HepG2 (cell line): ENCODE measurements at regions of chr6 and their contacts with region 1.

Region 1: GRCh38 chr6:110815217-110816109 is at the start of gene CDK19:
- DNase-seq: peak; percentile 98
- ATAC-seq: peak; percentile 91
- H3K4me3 ChIP-seq: peak within 1 kb of the TSS; percentile 92 to 94 (median 92)
- H3K27ac ChIP-seq: peak within 1 kb of the TSS; percentile 100
- H3K4me1 ChIP-seq: peaks cover 38% of the 10 kb centered on the region
- H3K27me3 ChIP-seq: no peaks in the 10 kb centered on the region; a peak in 1 of 5 replicates
- CTCF ChIP-seq: no peak
- EP300 ChIP-seq: no peak
- POLR2A ChIP-seq: peak; percentile 94 to 98
- RAD21 ChIP-seq: no peak
- total RNA-seq, gene CDK19: 13.4 and 20.8 TPM in 2 replicates

Region 2: DNA sequence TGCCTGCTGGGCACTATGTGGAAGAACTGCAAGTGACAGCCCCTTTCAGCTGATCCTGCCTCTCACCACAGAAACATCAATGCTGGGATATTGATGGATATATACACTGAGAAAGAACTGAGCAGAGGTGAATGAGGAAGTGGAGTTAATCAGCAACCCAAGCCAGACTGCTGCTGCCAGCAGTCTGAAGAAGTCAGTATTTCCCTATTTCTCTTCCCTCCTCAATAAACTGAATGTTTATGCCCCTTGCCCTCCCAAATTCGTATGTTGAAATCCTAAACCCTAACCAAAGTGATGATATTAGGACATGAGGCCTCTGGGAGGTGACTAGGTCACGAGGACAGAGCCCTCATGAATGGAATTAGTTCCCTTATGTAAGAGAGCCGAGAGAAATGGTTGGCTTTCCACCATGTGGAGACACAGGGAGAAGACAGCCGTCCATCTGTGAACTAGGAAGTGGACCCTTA is 76.5 kb before region 1 on chr6:
- CTCF ChIA-PET with region 1: no interaction called
- POLR2A ChIA-PET with region 1: interaction called, 5 read pairs
- in situ Hi-C with region 1: no loop called
- intact Hi-C with region 1: loop called (anchors 5 kb)
- DNase-seq: peak; percentile 86
- ATAC-seq: peak; percentile 99
- H3K4me3 ChIP-seq: peak overlapping the region in 2 of 3 experiments; percentile 23 to 24; a peak in 4 of 6 replicates
- H3K27ac ChIP-seq: peak overlapping the region; percentile 71
- H3K4me1 ChIP-seq: peaks cover 39% of the 10 kb centered on the region
- H3K27me3 ChIP-seq: no peaks in the 10 kb centered on the region
- CTCF ChIP-seq: peak; percentile 29
- EP300 ChIP-seq: peak in 1 of 2 experiments; percentile 56; a peak in 2 of 4 replicates
- POLR2A ChIP-seq: peak in 1 of 2 experiments; percentile 38; a peak in 1 of 4 replicates
- RAD21 ChIP-seq: no peak

Region 3: DNA sequence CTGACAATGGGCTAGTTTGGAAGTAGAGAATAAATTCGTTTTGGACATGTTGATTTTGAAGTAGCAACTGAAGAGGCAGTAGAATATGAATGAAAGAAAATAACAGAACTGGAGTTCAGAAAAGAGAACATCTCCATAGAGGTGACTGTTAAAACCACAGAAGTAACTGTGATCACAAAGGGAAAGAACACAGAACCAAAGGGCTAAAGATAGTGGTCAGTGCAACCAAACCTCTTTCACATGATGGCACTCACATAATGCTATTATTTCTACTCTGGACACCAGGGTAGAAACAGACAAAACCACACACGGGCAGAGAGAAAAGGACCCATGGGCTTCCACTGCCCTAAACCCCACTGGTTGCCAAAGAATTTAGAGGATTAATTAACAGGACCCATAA is 58.6 kb before region 1 on chr6:
- CTCF ChIA-PET with region 1: no interaction called
- POLR2A ChIA-PET with region 1: interaction called, 11 read pairs
- in situ Hi-C with region 1: no loop called
- intact Hi-C with region 1: no loop called
- DNase-seq: no peak
- ATAC-seq: no peak
- H3K4me3 ChIP-seq: no peak overlapping the region
- H3K27ac ChIP-seq: peak overlapping the region; percentile 5
- H3K4me1 ChIP-seq: peaks cover 53% of the 10 kb centered on the region
- H3K27me3 ChIP-seq: no peaks in the 10 kb centered on the region
- CTCF ChIP-seq: no peak
- EP300 ChIP-seq: no peak
- POLR2A ChIP-seq: no peak
- RAD21 ChIP-seq: no peak

Region 4: DNA sequence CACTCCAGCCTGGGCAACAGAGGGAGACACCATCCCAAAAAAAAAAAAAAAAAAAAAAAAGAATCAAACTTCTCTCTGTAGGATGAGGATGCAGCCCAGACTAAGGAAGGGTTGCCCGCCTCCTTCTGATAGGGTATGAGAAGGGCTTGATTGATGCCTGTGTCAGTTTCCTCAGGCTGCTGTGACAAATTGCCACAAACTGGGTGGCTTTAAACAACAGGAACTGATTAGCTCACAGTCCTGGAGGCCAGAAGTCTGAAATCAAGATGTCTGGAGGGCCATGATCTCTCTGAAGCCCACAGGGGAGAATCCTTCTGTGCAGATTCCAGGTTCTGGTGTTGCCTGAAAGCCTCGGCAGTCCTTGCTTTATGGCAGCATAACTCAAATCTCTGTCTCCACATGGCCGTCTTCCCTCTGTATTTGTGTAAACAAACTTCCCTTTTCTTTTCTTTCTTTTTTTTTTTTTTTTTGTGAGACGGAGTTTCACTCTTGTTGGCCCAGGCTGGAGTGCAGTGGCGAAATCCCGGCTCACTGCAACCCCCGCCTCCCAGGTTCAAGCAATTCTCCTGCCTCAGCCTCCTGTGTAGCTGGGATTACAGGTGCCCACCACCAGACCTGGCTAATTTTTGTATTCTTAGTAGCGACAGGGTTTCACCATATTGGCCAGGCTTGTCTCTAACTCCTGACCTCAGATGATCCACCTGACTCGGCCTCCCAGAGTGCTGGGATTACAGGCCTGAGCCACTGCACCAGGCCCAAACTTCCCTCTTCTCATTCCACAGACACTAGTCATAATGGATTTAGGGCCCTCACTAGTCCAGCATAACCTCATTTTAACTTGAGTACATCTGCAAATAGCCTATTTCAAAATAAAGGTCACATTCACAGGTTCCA is 11.0 kb after region 1 on chr6:
- CTCF ChIA-PET with region 1: no interaction called
- POLR2A ChIA-PET with region 1: interaction called, 20 read pairs
- in situ Hi-C with region 1: no loop called
- intact Hi-C with region 1: no loop called
- DNase-seq: no peak
- ATAC-seq: peak; percentile 76
- H3K4me3 ChIP-seq: peak overlapping the region; percentile 17 to 42 (median 19); a peak in 5 of 6 replicates
- H3K27ac ChIP-seq: peak overlapping the region; percentile 35
- H3K4me1 ChIP-seq: peaks cover 22% of the 10 kb centered on the region
- H3K27me3 ChIP-seq: no peaks in the 10 kb centered on the region
- CTCF ChIP-seq: no peak
- EP300 ChIP-seq: no peak
- POLR2A ChIP-seq: no peak
- RAD21 ChIP-seq: no peak

Region 5: GRCh38 chr6:110949679-110950285 is 134.3 kb after region 1 on chr6:
- CTCF ChIA-PET with region 1: no interaction called
- POLR2A ChIA-PET with region 1: no interaction called
- in situ Hi-C with region 1: no loop called
- intact Hi-C with region 1: loop called (anchors 1 kb)
- DNase-seq: no peak
- ATAC-seq: no peak
- H3K4me3 ChIP-seq: no peak overlapping the region
- H3K27ac ChIP-seq: no peak overlapping the region
- H3K4me1 ChIP-seq: peaks cover 45% of the 10 kb centered on the region
- H3K27me3 ChIP-seq: no peaks in the 10 kb centered on the region
- CTCF ChIP-seq: peak; percentile 23; the same call in 1 of the 2 replicates
- EP300 ChIP-seq: no peak
- POLR2A ChIP-seq: no peak
- RAD21 ChIP-seq: no peak